ENCODE measurements at regions of chr1 and their contacts with region 1.

Region 1: GRCh38 chr1:160428655-160429054 is 28.3 kb downstream of the VANGL2 start:
- DNase-seq: no peak
- ATAC-seq: peak; percentile 68

Region 2: DNA sequence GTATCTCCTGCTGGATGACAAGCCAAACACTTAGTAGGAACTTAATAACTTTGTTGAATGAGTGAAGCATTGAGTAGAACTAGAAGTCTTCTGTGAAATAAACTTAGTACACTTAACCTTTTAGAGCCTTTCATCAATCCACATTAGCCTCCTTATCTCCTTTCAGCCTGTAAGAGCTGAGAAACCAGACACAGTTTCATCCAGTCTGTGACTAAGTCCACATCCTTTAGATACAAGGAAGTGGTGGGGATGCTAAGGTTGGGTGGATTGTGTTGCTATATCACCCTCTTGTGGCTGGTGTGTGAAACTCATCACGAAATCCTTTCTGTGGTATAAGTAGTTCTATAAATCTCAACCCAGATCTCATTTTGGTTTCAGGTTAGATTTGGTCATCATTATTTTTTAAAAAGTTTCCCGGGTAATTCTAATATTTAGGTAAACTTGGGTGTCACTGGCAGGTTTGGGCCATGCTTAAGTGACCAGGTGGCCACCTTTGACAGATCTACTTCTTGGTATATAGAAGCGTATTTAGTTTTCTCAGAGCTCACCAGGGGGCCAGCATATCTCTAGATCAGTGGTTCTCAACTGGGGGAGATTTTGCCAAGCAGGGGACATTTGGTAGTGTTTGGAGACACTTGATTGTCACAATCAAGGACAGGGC is 178.5 kb after region 1 on chr1:
- intact Hi-C with region 1: loop called (anchors 2 kb)
- DNase-seq: no peak
- ATAC-seq: peak; percentile 76

Region 3: GRCh38 chr1:160830321-160831153 is 401.9 kb after region 1 on chr1:
- intact Hi-C with region 1: loop called (anchors 5 kb)
- DNase-seq: peak; percentile 72
- ATAC-seq: no peak